T-cell (primary cell): ENCODE measurements at regions of chr1 and their contacts with region 1.

Region 1: GRCh38 chr1:185566995-185567394 is 167.2 kb upstream of the HMCN1 start:
- DNase-seq: peak in 33 of 35 experiments; percentile 8 to 94 (median 52)
- ATAC-seq: peak; percentile 89 to 91 (median 89)
- H3K4me3 ChIP-seq: peak overlapping the region in 1 of 2 donors; percentile 18
- H3K4me3 Mint-ChIP-seq: peak overlapping the region; percentile 55 to 67 (median 62)
- H3K27ac ChIP-seq: peak overlapping the region; percentile 93
- H3K27ac Mint-ChIP-seq: peak overlapping the region; percentile 97 to 98
- H3K4me1 ChIP-seq: peaks cover 34 to 57% of the 10 kb centered on the region in 2 experiments
- H3K4me1 Mint-ChIP-seq: peaks cover 81 to 92% (median 91%) of the 10 kb centered on the region in 3 donors
- H3K27me3 ChIP-seq: no peaks in the 10 kb centered on the region
- H3K27me3 Mint-ChIP-seq: no peaks in the 10 kb centered on the region

Region 2: GRCh38 chr1:185144233-185144632 is 422.8 kb before region 1 on chr1:
- CTCF ChIA-PET with region 1: no interaction called
- POLR2A ChIA-PET with region 1: interaction called in 1 of 2 experiments, 14 read pairs
- DNase-seq: no peak
- ATAC-seq: no peak
- H3K4me3 ChIP-seq: no peak overlapping the region
- H3K4me3 Mint-ChIP-seq: no peak overlapping the region
- H3K27ac ChIP-seq: no peak overlapping the region
- H3K27ac Mint-ChIP-seq: no peak overlapping the region
- H3K4me1 ChIP-seq: no peaks in the 10 kb centered on the region
- H3K4me1 Mint-ChIP-seq: peaks cover 0 to 15% (median 5%) of the 10 kb centered on the region in 3 donors
- H3K27me3 ChIP-seq: no peaks in the 10 kb centered on the region
- H3K27me3 Mint-ChIP-seq: no peaks in the 10 kb centered on the region